ENCODE measurements at regions of chr3 and their contacts with region 1.

Region 1: GRCh38 chr3:138479438-138479863 is 45.0 kb downstream of the ESYT3 start:
- DNase-seq: peak; percentile 39 to 75
- H3K4me3 ChIP-seq: no peak overlapping the region
- H3K4me1 ChIP-seq: no peaks in the 10 kb centered on the region
- H3K27me3 ChIP-seq: no peaks in the 10 kb centered on the region

Region 2: DNA sequence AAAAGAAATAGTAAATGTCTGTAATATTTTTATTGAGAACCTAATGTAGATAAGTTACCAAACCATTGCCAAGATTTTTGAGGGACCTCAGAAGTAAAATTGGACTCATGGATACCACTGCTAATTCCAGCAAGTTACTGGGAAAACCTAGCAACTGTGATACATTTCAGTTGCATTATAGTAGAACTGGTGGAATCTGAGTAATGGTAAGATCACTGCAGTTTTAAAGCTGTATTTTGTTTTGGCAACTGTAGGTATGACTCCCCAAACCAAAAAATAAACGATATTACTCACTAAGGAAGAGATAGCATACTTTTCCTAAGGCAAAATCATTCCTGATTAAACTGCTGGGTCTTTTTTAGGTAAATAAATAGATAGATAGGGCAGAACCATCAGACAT is 238.4 kb before region 1 on chr3:
- in situ Hi-C with region 1: no loop called
- DNase-seq: no peak
- H3K4me3 ChIP-seq: no peak overlapping the region
- H3K4me1 ChIP-seq: no peaks in the 10 kb centered on the region
- H3K27me3 ChIP-seq: no peaks in the 10 kb centered on the region

Region 3: DNA sequence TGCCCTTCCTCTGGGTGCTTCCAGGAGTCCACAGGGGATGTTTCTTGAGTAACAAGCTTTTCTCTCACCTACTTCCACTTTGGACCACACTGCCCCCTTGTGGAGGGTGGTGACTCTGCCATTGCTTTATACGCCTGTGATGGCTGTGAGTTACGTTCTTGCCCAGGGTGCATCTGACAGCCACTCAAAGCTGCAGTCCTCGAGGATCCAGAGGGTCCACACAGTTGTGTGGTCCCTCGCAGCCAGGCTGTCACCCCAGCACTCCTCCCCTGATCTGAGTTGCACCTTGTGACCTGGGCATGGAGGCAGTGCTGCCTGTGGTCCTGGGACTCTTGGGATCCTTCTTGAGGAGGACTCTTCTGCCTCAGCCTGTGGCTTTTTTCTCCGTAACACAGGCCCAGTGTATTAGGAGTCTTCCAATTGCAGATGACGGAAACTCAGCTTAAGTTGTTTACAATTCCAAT is 444.1 kb after region 1 on chr3:
- in situ Hi-C with region 1: loop called (anchors 10 kb)
- DNase-seq: peak; percentile 72 to 92
- H3K4me3 ChIP-seq: no peak overlapping the region
- H3K4me1 ChIP-seq: no peaks in the 10 kb centered on the region
- H3K27me3 ChIP-seq: no peaks in the 10 kb centered on the region